Activated CD4-positive, alpha-beta T cell treated with anti-CD3 and anti-CD28 coated beads, Interleukin-2, amount 10 ng/mL, durations not matched to agents 24 days and 14 days (primary cell): ENCODE measurements at regions of chr12 and their contacts with region 1.

Region 1: GRCh38 chr12:54005853-54006686 is 2.7 kb upstream of the HOXC8 start:
- DNase-seq: peak; percentile 95
- H3K4me3 Mint-ChIP-seq: peak overlapping the region; percentile 85
- H3K27ac Mint-ChIP-seq: peak overlapping the region; percentile 20
- H3K4me1 Mint-ChIP-seq: peaks cover 29% of the 10 kb centered on the region
- H3K27me3 Mint-ChIP-seq: peaks cover 93% of the 10 kb centered on the region

Region 2: GRCh38 chr12:53974084-53975063 is 31.7 kb before region 1 on chr12 and contains the start of gene HOTAIR:
- intact Hi-C with region 1: loop called (anchors 5 kb)
- DNase-seq: peak; percentile 72
- H3K4me3 Mint-ChIP-seq: peak within 1 kb of the TSS; percentile 36
- H3K27ac Mint-ChIP-seq: peak within 1 kb of the TSS; percentile 80
- H3K4me1 Mint-ChIP-seq: peaks cover 9% of the 10 kb centered on the region
- H3K27me3 Mint-ChIP-seq: peaks cover 89% of the 10 kb centered on the region
- total RNA-seq, gene HOTAIR: not detected in 2 replicates

Region 3: GRCh38 chr12:54017878-54018467 is 11.9 kb after region 1 on chr12:
- intact Hi-C with region 1: loop called (anchors 1 kb)
- DNase-seq: peak; percentile 91
- H3K4me3 Mint-ChIP-seq: peak overlapping the region; percentile 86
- H3K27ac Mint-ChIP-seq: peak overlapping the region; percentile 37
- H3K4me1 Mint-ChIP-seq: peaks cover 17% of the 10 kb centered on the region
- H3K27me3 Mint-ChIP-seq: peaks cover 79% of the 10 kb centered on the region

Region 4: GRCh38 chr12:54032627-54033100 is 26.6 kb after region 1 on chr12 and contains the start of gene HOXC5:
- intact Hi-C with region 1: loop called (anchors 1 kb)
- DNase-seq: peak; percentile 90
- H3K4me3 Mint-ChIP-seq: peak within 1 kb of the TSS; percentile 69
- H3K27ac Mint-ChIP-seq: peak within 1 kb of the TSS; percentile 59
- H3K4me1 Mint-ChIP-seq: peaks cover 19% of the 10 kb centered on the region
- H3K27me3 Mint-ChIP-seq: peaks cover 83% of the 10 kb centered on the region
- total RNA-seq, gene HOXC5: not detected in 2 replicates

Region 5: DNA sequence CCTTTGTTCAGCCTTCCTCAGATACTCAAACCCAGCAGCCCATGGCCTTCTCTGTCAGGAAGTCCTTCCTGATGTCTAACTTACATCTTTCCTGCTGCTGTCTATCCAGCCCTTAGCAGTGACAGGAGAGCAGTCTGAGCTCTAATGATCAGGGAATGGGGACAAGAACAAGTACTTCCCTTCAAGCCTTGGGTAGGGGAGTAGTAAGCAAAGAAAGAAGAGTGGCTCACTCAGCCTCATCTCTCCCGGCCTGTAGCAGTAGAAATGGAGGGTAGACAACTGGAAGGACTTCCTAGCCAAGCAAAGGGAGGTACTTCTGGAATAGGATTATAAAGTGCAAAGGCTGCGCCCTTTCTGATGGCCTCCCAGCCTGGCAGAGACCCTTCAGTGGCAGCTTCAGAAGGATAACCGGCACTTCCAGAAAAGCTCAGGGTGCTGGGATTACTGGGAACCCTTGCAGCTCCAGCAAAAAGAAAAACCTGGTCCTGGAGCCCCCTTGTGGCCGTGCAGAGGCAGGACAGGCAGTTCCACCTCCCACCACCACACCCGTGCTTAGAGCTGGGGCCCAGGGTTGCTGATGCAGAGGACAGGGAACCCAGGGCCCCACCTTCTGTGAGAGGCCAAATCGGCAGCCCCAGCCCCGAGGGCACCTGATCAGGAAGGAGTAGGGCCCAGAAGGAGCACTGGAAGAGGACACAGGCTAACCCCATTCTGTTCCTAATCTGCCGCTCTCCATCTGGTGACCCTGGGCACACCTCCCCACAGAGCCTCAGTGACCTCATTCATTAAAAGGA is 195.1 kb after region 1 on chr12:
- intact Hi-C with region 1: loop called (anchors 1 kb)
- DNase-seq: peak; percentile 90
- H3K4me3 Mint-ChIP-seq: no peak overlapping the region
- H3K27ac Mint-ChIP-seq: no peak overlapping the region
- H3K4me1 Mint-ChIP-seq: peaks cover 1% of the 10 kb centered on the region
- H3K27me3 Mint-ChIP-seq: peaks cover 58% of the 10 kb centered on the region